ENCODE measurements at regions of chr10 and their contacts with region 1.

Region 1: GRCh38 chr10:93916257-93917063 is 22.7 kb downstream of the SLC35G1 start:
- DNase-seq: no peak
- ATAC-seq: no peak
- H3K4me3 Mint-ChIP-seq: no peak overlapping the region
- H3K27ac Mint-ChIP-seq: no peak overlapping the region
- H3K4me1 Mint-ChIP-seq: no peaks in the 10 kb centered on the region
- H3K27me3 Mint-ChIP-seq: no peaks in the 10 kb centered on the region

Region 2: DNA sequence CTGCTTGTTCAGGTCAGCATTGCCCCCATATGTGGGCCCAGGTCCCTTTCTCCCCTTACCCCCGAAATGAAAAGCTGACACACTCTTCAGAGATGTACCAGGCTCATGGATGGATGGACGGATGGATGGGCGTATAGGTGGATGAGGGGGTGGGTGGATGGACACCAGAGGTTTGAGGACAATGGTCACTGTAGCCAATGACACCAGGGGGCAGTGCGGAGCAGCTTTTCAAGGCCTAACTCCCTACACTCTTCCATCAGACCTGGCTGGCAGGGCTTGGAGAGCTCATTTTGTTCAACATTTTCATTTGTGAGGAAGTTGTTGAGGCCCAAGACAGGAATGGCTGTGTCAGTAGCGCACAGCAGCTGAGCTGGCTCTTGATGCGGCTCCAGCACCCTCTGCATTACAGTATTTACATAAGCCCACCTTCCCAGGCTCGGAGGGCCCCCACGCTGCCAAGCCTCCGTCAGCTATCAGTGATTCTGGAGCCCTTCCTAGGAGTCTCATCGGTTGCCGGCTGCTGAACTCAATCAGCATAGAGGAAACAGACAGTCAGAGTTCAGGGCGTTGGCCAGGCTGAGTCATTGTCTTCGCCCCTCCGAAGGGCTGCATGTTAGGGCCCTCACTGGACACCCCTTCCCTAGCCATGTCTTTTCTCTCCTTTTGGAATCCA is 361.6 kb before region 1 on chr10:
- CTCF ChIA-PET with region 1: no interaction called
- POLR2A ChIA-PET with region 1: no interaction called
- intact Hi-C with region 1: loop called in 1 of 2 experiments (anchors 5 kb)
- DNase-seq: peak; percentile 73
- ATAC-seq: peak; percentile 64
- H3K4me3 Mint-ChIP-seq: no peak overlapping the region
- H3K27ac Mint-ChIP-seq: no peak overlapping the region
- H3K4me1 Mint-ChIP-seq: no peaks in the 10 kb centered on the region
- H3K27me3 Mint-ChIP-seq: peaks cover 9% of the 10 kb centered on the region

Region 3: DNA sequence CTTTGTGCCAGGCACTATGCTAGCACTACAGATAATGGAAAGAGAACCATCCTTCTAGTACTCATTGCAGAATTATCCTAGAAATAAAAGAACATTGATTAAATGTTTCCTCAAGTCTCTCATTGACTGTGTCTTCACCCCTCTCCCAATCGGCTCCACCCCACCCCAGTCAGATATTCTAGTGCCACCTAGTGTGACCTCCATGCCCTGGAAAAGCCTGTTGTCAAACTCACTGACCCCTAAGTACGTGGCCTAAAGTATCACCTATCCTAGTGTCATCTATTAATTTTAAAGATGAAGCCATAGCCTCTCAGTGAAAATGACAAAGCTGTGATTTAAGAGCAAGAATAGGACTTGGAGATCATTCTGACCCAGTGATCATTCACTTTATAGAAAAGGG is 132.4 kb before region 1 on chr10:
- CTCF ChIA-PET with region 1: no interaction called
- POLR2A ChIA-PET with region 1: no interaction called
- intact Hi-C with region 1: no loop called
- DNase-seq: no peak
- ATAC-seq: no peak
- H3K4me3 Mint-ChIP-seq: no peak overlapping the region
- H3K27ac Mint-ChIP-seq: no peak overlapping the region
- H3K4me1 Mint-ChIP-seq: no peaks in the 10 kb centered on the region
- H3K27me3 Mint-ChIP-seq: peaks cover 4% of the 10 kb centered on the region

Region 4: DNA sequence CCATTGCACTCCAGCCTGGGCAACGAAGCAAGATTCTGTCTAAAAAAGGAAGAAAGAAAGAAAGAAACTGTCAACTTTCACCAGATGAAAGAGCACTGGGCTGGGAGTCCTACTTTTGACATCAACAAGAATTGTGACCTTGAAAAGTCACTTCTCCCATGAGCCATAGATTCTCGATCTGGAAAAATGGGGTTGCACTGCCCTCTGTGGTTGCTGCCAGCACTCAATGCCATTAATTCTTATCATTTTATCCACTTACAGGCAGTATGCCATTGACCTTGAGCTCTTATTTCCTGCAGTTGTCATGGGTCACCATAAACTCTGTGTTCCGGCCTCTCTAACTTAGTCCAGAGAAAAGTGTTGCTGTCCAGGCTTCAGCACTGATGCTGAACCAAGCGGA is 309.1 kb after region 1 on chr10:
- CTCF ChIA-PET with region 1: no interaction called
- POLR2A ChIA-PET with region 1: no interaction called
- intact Hi-C with region 1: loop called in 1 of 2 experiments (anchors 10 kb)
- DNase-seq: peak; percentile 10
- ATAC-seq: no peak
- H3K4me3 Mint-ChIP-seq: no peak overlapping the region
- H3K27ac Mint-ChIP-seq: no peak overlapping the region
- H3K4me1 Mint-ChIP-seq: no peaks in the 10 kb centered on the region
- H3K27me3 Mint-ChIP-seq: peaks cover 1% of the 10 kb centered on the region

Region 5: DNA sequence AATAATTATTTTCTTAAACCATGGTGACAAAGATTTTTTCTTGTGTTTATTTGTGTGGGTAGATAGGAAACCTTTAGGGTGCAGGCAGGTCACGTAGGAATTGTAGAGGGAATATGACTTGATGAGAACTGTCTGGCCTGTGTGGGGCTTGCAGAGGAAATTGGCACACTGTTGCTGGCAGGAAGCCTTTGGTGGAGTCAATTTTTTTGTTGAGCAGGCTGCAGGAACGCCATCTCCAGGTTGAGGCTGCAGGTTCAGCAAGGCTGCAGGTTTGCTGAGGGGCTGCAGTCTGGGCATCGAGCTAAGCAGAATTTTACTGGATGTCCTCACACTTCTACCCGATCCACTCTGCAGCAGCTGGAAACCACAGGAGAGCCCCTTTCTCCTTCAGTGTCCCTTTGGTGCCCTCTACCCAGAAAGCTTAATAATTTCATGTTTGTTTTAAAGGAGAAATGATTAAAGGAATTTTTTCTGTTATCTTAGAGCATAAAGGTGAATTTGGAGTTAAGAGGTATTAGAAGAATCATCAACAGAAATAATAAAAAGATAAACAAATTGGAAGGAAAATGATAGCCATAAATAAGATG is 522.9 kb after region 1 on chr10:
- CTCF ChIA-PET with region 1: interaction called, 4 read pairs
- POLR2A ChIA-PET with region 1: no interaction called
- intact Hi-C with region 1: loop called in 1 of 2 experiments (anchors 5 kb)
- DNase-seq: no peak
- ATAC-seq: no peak
- H3K4me3 Mint-ChIP-seq: no peak overlapping the region
- H3K27ac Mint-ChIP-seq: no peak overlapping the region
- H3K4me1 Mint-ChIP-seq: no peaks in the 10 kb centered on the region
- H3K27me3 Mint-ChIP-seq: peaks cover 18% of the 10 kb centered on the region

Measured in activated CD4-positive, alpha-beta T cell treated with anti-CD3 and anti-CD28 coated beads for 36 hours (primary cell).